Endothelial cell of umbilical vein (primary cell): ENCODE measurements at regions of chr3 and their contacts with region 1.

Region 1: DNA sequence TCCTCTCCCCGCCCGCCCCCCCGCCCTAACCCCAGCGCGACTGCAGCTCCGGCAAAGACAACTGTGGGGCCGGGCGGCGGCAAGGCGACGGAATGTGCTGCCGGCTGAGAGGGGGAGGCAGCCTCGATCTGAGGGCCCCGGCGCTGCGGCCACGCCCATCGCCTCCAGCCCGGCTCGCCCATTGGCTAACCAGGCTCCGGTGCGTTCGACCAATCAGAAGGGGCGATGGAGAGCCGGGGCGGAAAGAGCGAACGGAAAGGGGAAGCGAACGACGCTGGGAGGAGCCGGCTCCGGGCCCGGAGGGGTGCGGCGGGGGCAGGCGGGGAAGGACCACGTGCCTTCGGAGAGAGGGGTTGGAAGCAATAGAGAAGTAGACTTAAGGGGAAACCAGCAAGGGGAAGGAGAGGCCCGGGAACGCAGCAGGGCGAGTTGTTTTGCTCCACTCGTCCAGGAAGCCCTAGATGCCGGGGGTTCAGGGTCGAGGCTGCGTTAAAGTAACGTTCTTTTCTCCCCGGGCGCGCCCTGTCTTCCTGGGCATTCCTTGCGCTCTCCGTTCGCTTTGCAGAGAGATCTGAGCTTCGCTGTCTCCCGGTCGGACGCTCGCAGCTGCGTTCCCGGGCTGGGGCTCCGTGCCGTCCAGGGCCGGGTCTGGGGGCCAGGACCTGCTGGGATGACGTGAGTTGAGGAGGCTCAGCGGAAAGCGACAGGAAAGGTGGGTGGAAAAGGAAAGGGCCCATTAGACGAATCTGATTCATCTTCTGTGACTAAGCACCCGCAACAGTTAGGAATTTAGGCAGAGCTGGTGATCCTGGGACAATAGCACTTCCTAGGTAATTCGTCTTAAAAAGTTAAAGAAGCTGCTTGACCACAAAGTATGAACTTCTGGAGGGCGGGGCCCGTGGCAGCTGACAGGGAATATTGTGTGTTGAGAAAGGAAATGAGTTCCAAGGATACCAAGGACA is at the start of gene KPNA4:
- DNase-seq: peak; percentile 98
- H3K4me3 ChIP-seq: peak within 1 kb of the TSS; percentile 90 to 94 (median 93)
- H3K27ac ChIP-seq: peak within 1 kb of the TSS; percentile 99
- H3K4me1 ChIP-seq: peaks cover 55% of the 10 kb centered on the region
- H3K27me3 ChIP-seq: no peaks in the 10 kb centered on the region
- CTCF ChIP-seq: no peak
- POLR2A ChIP-seq: peak; percentile 70
- total RNA-seq, gene KPNA4: 70.1 and 80.7 TPM in 2 replicates

Region 2: GRCh38 chr3:159872374-159873109 is 693.2 kb before region 1 on chr3:
- CTCF ChIA-PET with region 1: no interaction called
- POLR2A ChIA-PET with region 1: no interaction called
- dilution Hi-C with region 1: no loop called
- intact Hi-C with region 1: loop called (anchors 10 kb)
- DNase-seq: peak; percentile 85
- H3K4me3 ChIP-seq: no peak overlapping the region
- H3K27ac ChIP-seq: peak overlapping the region; percentile 92
- H3K4me1 ChIP-seq: peaks cover 19% of the 10 kb centered on the region
- H3K27me3 ChIP-seq: no peaks in the 10 kb centered on the region
- CTCF ChIP-seq: peak; percentile 12 to 25
- POLR2A ChIP-seq: no peak

Region 3: DNA sequence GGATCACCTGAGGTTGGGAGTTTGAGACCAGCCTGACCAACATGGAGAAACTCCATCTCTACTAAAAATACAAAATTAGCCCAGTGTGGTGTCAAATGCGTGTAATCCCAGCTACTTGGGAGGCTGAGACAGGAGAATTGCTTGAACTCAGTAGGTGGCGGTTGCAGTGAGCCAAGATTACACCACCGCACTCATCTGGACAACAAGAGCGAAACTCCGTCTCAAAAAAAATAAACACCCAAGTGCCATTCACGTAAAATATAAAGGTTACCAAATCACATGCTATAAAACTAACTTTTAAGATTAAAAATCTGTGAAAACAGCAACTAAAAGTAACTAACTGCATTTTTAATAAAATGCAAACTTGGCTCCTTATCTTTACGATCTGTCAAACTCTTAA is 125.0 kb before region 1 on chr3:
- CTCF ChIA-PET with region 1: no interaction called
- POLR2A ChIA-PET with region 1: no interaction called
- dilution Hi-C with region 1: no loop called
- intact Hi-C with region 1: loop called (anchors 2 kb)
- DNase-seq: no peak
- H3K4me3 ChIP-seq: no peak overlapping the region
- H3K27ac ChIP-seq: no peak overlapping the region
- H3K4me1 ChIP-seq: no peaks in the 10 kb centered on the region
- H3K27me3 ChIP-seq: no peaks in the 10 kb centered on the region
- CTCF ChIP-seq: no peak
- POLR2A ChIP-seq: no peak

Region 4: DNA sequence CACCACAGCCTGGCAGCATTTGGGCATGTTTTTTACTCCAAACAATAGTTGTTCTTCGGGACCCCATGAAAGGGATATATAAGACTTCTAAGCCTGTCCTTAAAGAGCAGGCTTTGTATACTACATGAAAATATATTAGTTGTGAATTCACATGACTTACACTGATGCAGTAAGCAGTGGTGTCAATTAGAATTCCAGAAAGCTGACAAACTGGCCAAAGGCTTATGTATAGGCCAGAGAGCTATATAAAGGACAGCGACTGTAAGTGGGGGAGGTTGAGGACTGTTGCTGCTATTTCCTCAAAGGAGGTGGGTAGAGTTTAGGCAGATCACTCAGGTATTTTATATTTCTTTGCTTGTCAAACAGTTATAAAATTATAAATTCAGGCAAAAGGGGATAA is 25.2 kb before region 1 on chr3:
- CTCF ChIA-PET with region 1: no interaction called
- POLR2A ChIA-PET with region 1: no interaction called
- dilution Hi-C with region 1: no loop called
- intact Hi-C with region 1: no loop called
- DNase-seq: no peak
- H3K4me3 ChIP-seq: no peak overlapping the region
- H3K27ac ChIP-seq: no peak overlapping the region
- H3K4me1 ChIP-seq: no peaks in the 10 kb centered on the region
- H3K27me3 ChIP-seq: no peaks in the 10 kb centered on the region
- CTCF ChIP-seq: no peak
- POLR2A ChIP-seq: no peak

Region 5: DNA sequence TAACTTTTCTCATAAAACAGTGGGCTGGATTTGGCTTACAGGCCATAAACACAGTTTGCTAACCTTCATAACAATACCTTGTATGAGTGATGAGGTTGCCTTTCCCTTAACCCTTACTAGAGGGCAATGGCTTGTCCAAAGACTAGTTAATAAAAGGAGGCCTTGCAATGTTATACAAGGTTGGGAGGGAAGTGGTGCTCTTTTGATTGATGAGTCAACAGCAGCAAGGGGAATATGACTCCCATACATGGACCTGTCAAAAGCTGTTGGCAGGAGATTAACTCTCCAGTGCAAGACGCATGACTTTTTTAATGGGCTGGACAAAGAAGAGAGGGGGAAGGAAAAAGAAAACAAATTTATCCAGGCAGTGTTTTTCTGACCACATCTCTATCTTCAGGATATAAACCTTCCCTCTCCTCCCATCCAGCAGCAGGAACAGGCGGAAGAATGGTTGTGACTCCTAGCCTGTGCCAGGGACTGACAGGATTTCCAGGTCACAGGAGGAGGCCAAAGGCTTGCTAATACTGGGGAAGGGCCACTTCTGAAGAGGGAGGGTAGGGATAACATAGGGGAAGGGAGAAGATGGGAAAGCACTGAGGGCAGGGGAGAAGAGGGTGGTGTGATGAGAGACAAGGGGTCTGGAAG is 76.1 kb after region 1 on chr3:
- CTCF ChIA-PET with region 1: no interaction called
- POLR2A ChIA-PET with region 1: no interaction called
- dilution Hi-C with region 1: no loop called
- intact Hi-C with region 1: loop called (anchors 1 kb)
- DNase-seq: peak; percentile 81
- H3K4me3 ChIP-seq: no peak overlapping the region
- H3K27ac ChIP-seq: peak overlapping the region; percentile 28
- H3K4me1 ChIP-seq: peaks cover 16% of the 10 kb centered on the region
- H3K27me3 ChIP-seq: no peaks in the 10 kb centered on the region
- CTCF ChIP-seq: no peak
- POLR2A ChIP-seq: no peak

Region 6: DNA sequence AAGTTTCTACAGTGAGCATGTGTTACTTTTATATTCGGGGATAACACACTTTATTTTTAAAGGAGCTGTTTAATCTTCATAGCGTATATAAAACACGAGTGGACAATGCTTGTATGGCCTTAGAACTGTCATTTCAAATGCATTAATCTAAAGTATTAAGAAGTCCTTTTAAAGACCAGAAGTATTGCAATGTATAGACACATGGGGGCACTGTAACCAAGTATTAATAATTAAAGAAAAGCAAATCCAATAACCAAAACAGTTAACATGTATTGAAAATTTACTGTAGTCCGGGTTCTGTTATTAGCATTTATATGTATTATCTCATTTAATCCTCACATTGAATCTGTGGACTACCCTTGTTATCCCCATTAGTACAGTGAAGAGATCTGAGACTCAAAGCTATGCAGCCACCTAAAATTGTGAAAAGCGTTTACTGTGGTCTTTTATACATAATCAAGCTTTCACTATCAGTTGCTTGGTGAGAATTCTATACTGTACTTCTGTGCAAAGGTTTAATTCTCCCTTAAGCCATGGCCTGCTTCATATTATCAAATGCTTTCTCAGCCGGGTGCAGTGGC is 121.3 kb after region 1 on chr3:
- CTCF ChIA-PET with region 1: interaction called, 3 read pairs
- POLR2A ChIA-PET with region 1: no interaction called
- dilution Hi-C with region 1: no loop called
- intact Hi-C with region 1: loop called (anchors 2 kb)
- DNase-seq: peak; percentile 39
- H3K4me3 ChIP-seq: no peak overlapping the region
- H3K27ac ChIP-seq: no peak overlapping the region
- H3K4me1 ChIP-seq: no peaks in the 10 kb centered on the region
- H3K27me3 ChIP-seq: no peaks in the 10 kb centered on the region
- CTCF ChIP-seq: peak; percentile 16 to 18
- POLR2A ChIP-seq: no peak

Region 7: GRCh38 chr3:161035711-161036110 is 470.0 kb after region 1 on chr3:
- CTCF ChIA-PET with region 1: no interaction called
- POLR2A ChIA-PET with region 1: interaction called, 3 read pairs
- dilution Hi-C with region 1: no loop called
- intact Hi-C with region 1: loop called (anchors 1 kb)
- DNase-seq: peak; percentile 82
- H3K4me3 ChIP-seq: peak overlapping the region in 1 of 3 experiments; percentile 48
- H3K27ac ChIP-seq: peak overlapping the region; percentile 74
- H3K4me1 ChIP-seq: peaks cover 21% of the 10 kb centered on the region
- H3K27me3 ChIP-seq: no peaks in the 10 kb centered on the region
- CTCF ChIP-seq: no peak
- POLR2A ChIP-seq: no peak

Region 8: DNA sequence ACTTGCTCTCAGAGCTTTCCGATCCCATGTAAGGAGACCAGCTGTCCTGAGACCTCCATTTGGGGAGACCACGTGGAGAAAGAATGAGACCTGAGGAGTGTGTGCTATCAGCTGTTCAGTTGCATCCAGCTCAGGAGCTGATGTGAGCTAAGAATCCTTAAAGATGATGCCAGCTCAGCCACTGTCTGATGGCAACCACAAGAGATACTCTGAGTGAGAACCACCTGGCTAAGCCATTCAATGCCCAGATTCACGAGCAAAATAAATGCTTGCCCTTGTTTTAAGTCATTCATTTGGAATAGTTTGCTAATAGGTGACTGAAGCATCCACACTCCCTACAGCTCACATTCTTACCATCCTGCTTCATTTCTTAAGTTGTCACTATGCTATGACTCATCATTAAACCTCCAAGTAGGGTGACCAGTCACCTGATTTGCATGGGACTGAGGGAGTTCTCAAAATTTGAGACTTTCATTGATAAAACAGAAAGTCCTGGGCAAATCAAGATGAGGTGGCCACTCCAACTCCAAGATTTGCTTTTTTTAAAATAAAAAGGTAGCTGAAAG is 749.2 kb after region 1 on chr3:
- CTCF ChIA-PET with region 1: no interaction called
- POLR2A ChIA-PET with region 1: no interaction called
- dilution Hi-C with region 1: no loop called
- intact Hi-C with region 1: loop called (anchors 5 kb)
- DNase-seq: peak; percentile 10
- H3K4me3 ChIP-seq: no peak overlapping the region
- H3K27ac ChIP-seq: peak overlapping the region; percentile 84
- H3K4me1 ChIP-seq: peaks cover 23% of the 10 kb centered on the region
- H3K27me3 ChIP-seq: no peaks in the 10 kb centered on the region
- CTCF ChIP-seq: no peak
- POLR2A ChIP-seq: no peak